Dendritic cell treated with granulocyte-macrophage colony-stimulating factor and Interleukin-4, amounts not matched to agents 40 ng/mL and 50 ng/mL, for 4 days (primary cell): ENCODE measurements at regions of chr1 and their contacts with region 1.

Region 1: GRCh38 chr1:28581536-28582247 is 10.4 kb upstream of the RAB42 start:
- H3K4me3 Mint-ChIP-seq: peak overlapping the region; percentile 89
- H3K27ac Mint-ChIP-seq: peak overlapping the region; percentile 98
- H3K4me1 Mint-ChIP-seq: peaks cover 55% of the 10 kb centered on the region
- H3K27me3 Mint-ChIP-seq: no peaks in the 10 kb centered on the region

Region 2: DNA sequence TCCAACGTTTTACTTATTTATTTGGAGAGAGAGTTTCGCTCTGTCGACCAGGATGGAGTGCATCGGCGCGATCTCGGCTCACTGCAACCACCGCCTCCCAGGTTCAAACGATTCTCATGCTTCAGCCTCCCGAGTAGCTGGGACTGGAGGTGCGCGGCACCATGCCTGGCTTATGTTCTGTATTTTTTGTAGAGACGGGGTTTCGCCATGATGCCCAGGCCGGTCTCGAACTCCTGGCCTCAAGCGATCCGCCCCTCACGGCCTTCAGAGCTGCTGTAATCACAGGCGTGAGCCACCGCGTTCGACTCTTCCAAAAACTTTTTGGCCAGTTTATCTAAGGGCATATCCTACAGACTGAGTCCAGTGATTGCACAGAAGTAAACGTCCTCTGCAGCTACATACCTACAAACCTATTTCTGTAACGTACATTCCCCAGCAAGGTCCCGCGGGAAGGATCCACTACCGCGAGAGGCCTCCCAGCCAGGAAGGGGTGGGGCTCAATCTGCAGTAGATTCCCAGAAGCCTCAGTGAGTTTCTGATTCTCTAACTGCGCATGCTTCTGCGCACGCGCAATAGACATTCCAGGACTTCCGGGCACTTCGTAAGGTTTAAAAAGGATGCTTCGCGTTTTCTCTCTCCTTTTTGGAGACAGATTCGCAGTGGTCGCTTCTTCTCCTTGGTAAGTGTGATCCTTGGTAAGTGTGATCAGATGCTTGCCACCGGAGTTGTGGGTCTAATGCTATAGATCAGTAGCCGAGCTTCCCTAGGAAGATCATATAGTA is 76.1 kb before region 1 on chr1 and contains the start of gene RCC1:
- intact Hi-C with region 1: loop called (anchors 5 kb)
- H3K4me3 Mint-ChIP-seq: peak within 1 kb of the TSS; percentile 98
- H3K27ac Mint-ChIP-seq: peak within 1 kb of the TSS; percentile 98
- H3K4me1 Mint-ChIP-seq: peaks cover 33% of the 10 kb centered on the region
- H3K27me3 Mint-ChIP-seq: no peaks in the 10 kb centered on the region

Region 3: GRCh38 chr1:28552758-28553663 is 28.7 kb before region 1 on chr1 and contains the start of gene TRNAU1AP:
- intact Hi-C with region 1: loop called (anchors 1 kb)
- H3K4me3 Mint-ChIP-seq: peak within 1 kb of the TSS; percentile 95
- H3K27ac Mint-ChIP-seq: peak within 1 kb of the TSS; percentile 94
- H3K4me1 Mint-ChIP-seq: no peaks in the 10 kb centered on the region
- H3K27me3 Mint-ChIP-seq: no peaks in the 10 kb centered on the region

Region 4: GRCh38 chr1:28591708-28592320 is 10.1 kb after region 1 on chr1 and contains the start of gene RAB42:
- intact Hi-C with region 1: loop called (anchors 1 kb)
- H3K4me3 Mint-ChIP-seq: peak within 1 kb of the TSS; percentile 86
- H3K27ac Mint-ChIP-seq: peak within 1 kb of the TSS; percentile 76
- H3K4me1 Mint-ChIP-seq: peaks cover 47% of the 10 kb centered on the region
- H3K27me3 Mint-ChIP-seq: no peaks in the 10 kb centered on the region